ENCODE measurements at regions of chr20 and their contacts with region 1.

Region 1: GRCh38 chr20:23800878-23801277 is 25.7 kb downstream of the CST2 start:
- DNase-seq: no peak
- ATAC-seq: no peak
- H3K4me3 ChIP-seq: no peak overlapping the region
- H3K4me3 Mint-ChIP-seq: no peak overlapping the region
- H3K27ac ChIP-seq: no peak overlapping the region
- H3K27ac Mint-ChIP-seq: no peak overlapping the region
- H3K4me1 ChIP-seq: no peaks in the 10 kb centered on the region
- H3K4me1 Mint-ChIP-seq: no peaks in the 10 kb centered on the region
- H3K27me3 ChIP-seq: no peaks in the 10 kb centered on the region
- H3K27me3 Mint-ChIP-seq: peaks cover 6% of the 10 kb centered on the region
- CTCF ChIP-seq: no peak

Region 2: GRCh38 chr20:23727016-23727415 is 73.9 kb before region 1 on chr20:
- CTCF ChIA-PET with region 1: no interaction called
- POLR2A ChIA-PET with region 1: no interaction called
- intact Hi-C with region 1: loop called (anchors 5 kb)
- DNase-seq: no peak
- ATAC-seq: no peak
- H3K4me3 ChIP-seq: no peak overlapping the region
- H3K4me3 Mint-ChIP-seq: no peak overlapping the region
- H3K27ac ChIP-seq: no peak overlapping the region
- H3K27ac Mint-ChIP-seq: no peak overlapping the region
- H3K4me1 ChIP-seq: no peaks in the 10 kb centered on the region
- H3K4me1 Mint-ChIP-seq: no peaks in the 10 kb centered on the region
- H3K27me3 ChIP-seq: no peaks in the 10 kb centered on the region
- H3K27me3 Mint-ChIP-seq: peaks cover 4% of the 10 kb centered on the region
- CTCF ChIP-seq: no peak

Measured in B cell (primary cell).